ENCODE measurements at regions of chr5 and their contacts with region 1.

Region 1: GRCh38 chr5:135651150-135651549 is 72.4 kb upstream of the CXCL14 start:
- DNase-seq: peak; percentile 99
- H3K4me3 Mint-ChIP-seq: no peak overlapping the region
- H3K27ac Mint-ChIP-seq: peak overlapping the region; percentile 29
- H3K4me1 Mint-ChIP-seq: peaks cover 21% of the 10 kb centered on the region
- H3K27me3 Mint-ChIP-seq: no peaks in the 10 kb centered on the region
- CTCF ChIP-seq: no peak

Region 2: GRCh38 chr5:135667673-135668072 is 16.5 kb after region 1 on chr5:
- CTCF ChIA-PET with region 1: interaction called, 4 read pairs
- POLR2A ChIA-PET with region 1: interaction called, 10 read pairs
- intact Hi-C with region 1: no loop called
- DNase-seq: peak; percentile 57
- H3K4me3 Mint-ChIP-seq: no peak overlapping the region
- H3K27ac Mint-ChIP-seq: peak overlapping the region; percentile 65
- H3K4me1 Mint-ChIP-seq: peaks cover 9% of the 10 kb centered on the region
- H3K27me3 Mint-ChIP-seq: no peaks in the 10 kb centered on the region
- CTCF ChIP-seq: no peak

Region 3: GRCh38 chr5:136222583-136223274 is 571.6 kb after region 1 on chr5:
- CTCF ChIA-PET with region 1: no interaction called
- POLR2A ChIA-PET with region 1: no interaction called
- intact Hi-C with region 1: no loop called
- DNase-seq: peak; percentile 43
- H3K4me3 Mint-ChIP-seq: no peak overlapping the region
- H3K27ac Mint-ChIP-seq: no peak overlapping the region
- H3K4me1 Mint-ChIP-seq: peaks cover 6% of the 10 kb centered on the region
- H3K27me3 Mint-ChIP-seq: peaks cover 30% of the 10 kb centered on the region
- CTCF ChIP-seq: no peak

Measured in MCF 10A (cell line).